ENCODE measurements at regions of chr2 and their contacts with region 1.

Region 1: GRCh38 chr2:231706731-231707624 is 1.3 kb upstream of the PTMA start:
- DNase-seq: peak; percentile 95 to 97
- H3K4me3 ChIP-seq: peak overlapping the region; percentile 73
- H3K4me3 Mint-ChIP-seq: peak overlapping the region; percentile 88
- H3K27ac Mint-ChIP-seq: peak overlapping the region; percentile 99
- H3K4me1 ChIP-seq: no peaks in the 10 kb centered on the region
- H3K4me1 Mint-ChIP-seq: peaks cover 7% of the 10 kb centered on the region
- H3K27me3 ChIP-seq: no peaks in the 10 kb centered on the region
- H3K27me3 Mint-ChIP-seq: no peaks in the 10 kb centered on the region
- CTCF ChIP-seq: peak; percentile 52 to 85

Region 2: DNA sequence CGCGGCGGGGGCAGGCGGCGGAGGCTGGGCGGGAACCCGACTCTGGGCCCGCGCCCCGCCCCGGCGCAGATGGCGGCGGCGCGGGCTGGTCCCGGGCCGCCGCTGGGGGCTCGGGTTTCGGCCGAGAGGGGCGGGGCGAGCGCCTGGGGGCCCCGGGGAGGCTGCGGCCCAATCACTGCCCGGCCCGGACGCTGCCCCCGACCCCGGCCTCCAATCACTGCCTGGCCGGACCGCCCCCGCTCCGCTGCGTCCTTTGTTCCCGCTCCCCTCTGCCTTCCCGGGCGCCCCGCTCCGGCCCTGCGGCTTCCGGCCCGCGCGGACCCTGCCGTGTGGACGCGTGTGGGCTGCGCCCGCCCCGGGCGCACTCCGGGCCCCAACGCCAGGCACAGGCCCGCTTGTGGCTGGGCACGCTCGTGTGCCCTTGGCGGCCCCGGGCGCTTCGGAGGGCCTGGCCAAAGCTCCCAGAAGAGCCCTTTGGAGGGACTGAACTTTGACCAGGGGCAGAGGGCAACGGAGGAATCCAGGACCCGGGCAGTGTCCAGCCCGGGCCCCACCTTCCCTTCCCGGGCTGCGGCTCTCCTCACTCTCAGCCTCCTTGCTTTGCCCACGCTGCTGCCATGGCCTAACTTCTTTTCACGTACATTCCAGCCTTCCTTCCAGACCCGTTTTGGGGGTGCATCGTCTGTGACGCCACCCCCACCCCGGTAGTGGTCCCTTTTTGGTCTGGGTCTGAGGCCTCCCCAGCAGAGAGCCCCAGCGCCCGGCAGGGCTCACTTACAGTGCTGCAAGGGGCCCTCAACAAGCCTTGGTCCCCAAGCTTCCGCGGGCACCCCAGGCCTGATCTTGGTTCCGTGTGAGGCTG is 25.8 kb before region 1 on chr2:
- CTCF ChIA-PET with region 1: interaction called, 9 read pairs
- POLR2A ChIA-PET with region 1: interaction called, 20 read pairs
- intact Hi-C with region 1: loop called (anchors 1 kb)
- DNase-seq: peak; percentile 91 to 94
- H3K4me3 ChIP-seq: peak overlapping the region; percentile 67
- H3K4me3 Mint-ChIP-seq: peak overlapping the region; percentile 81
- H3K27ac Mint-ChIP-seq: peak overlapping the region; percentile 93
- H3K4me1 ChIP-seq: peaks cover 25% of the 10 kb centered on the region
- H3K4me1 Mint-ChIP-seq: peaks cover 16% of the 10 kb centered on the region
- H3K27me3 ChIP-seq: no peaks in the 10 kb centered on the region
- H3K27me3 Mint-ChIP-seq: no peaks in the 10 kb centered on the region
- CTCF ChIP-seq: no peak

Region 3: DNA sequence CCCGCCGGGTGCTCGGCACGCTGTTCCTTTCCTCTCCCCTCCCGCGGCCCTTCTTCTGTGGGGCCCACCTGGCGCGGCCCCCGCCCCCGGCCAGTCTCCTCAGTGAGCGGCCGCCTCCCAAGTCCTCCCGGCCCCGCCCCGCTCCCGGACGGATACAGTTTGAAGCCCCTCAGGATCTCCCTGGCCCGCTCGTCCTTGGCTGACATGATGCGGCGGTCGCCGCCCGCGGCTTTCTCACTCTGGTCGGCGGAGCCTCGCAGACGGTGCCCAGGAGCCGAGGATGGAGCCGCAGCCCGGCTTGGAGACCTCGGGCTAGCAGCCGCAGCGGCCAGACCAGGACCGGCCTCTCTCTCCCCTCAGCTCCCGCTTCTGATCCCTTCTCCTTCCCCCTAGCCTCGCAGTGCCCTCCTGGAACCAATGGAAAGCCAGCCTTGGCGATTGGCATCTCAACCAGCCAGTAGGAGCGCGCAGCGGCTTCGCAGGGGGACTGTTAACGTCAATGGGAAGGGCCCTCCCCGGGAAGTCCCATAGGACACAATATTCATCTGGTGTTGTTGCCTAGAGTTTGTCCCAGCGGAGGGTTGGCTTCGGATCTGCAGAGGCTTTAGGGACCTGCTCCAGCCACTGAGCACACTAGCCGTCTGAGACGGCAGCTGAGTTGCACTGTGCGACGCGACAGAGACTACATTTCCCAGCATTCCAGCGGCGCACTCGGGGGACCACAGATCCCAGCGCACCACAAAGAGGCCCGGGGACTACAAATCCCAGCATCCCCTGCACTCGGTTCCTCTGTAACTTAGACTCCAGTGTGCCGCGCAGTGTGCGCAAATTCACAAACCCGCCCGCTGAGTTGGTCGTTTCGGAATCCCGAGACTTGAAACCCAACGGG is 74.2 kb after region 1 on chr2 and contains the start of gene PDE6D:
- CTCF ChIA-PET with region 1: no interaction called
- POLR2A ChIA-PET with region 1: no interaction called
- intact Hi-C with region 1: loop called (anchors 10 kb)
- DNase-seq: peak; percentile 97
- H3K4me3 ChIP-seq: peak within 1 kb of the TSS; percentile 76
- H3K4me3 Mint-ChIP-seq: peak within 1 kb of the TSS; percentile 92
- H3K27ac Mint-ChIP-seq: peak within 1 kb of the TSS; percentile 53
- H3K4me1 ChIP-seq: no peaks in the 10 kb centered on the region
- H3K4me1 Mint-ChIP-seq: peaks cover 4% of the 10 kb centered on the region
- H3K27me3 ChIP-seq: no peaks in the 10 kb centered on the region
- H3K27me3 Mint-ChIP-seq: no peaks in the 10 kb centered on the region
- CTCF ChIP-seq: no peak
- total RNA-seq, gene PDE6D: 8.1 and 9.1 TPM in 2 replicates

Region 4: DNA sequence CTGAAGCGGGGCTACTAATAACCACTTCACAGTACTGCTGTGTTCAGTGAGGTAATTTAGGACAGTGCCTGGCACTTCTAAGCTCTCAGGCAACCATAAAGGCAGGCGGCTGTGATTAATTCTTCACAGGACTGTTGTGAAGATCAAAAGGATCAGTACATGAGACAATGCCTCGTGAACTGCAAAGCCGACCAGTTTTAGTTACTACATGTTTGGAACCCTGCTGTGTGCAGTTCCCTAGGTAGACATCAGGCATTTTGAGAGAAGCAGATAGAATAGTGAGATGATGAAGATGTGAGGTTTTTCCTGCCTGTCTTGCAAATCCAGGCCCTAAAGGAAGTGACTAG is 945.5 kb after region 1 on chr2:
- CTCF ChIA-PET with region 1: no interaction called
- POLR2A ChIA-PET with region 1: no interaction called
- intact Hi-C with region 1: no loop called
- DNase-seq: no peak
- H3K4me3 ChIP-seq: no peak overlapping the region
- H3K4me3 Mint-ChIP-seq: no peak overlapping the region
- H3K27ac Mint-ChIP-seq: no peak overlapping the region
- H3K4me1 ChIP-seq: no peaks in the 10 kb centered on the region
- H3K4me1 Mint-ChIP-seq: no peaks in the 10 kb centered on the region
- H3K27me3 ChIP-seq: no peaks in the 10 kb centered on the region
- H3K27me3 Mint-ChIP-seq: no peaks in the 10 kb centered on the region
- CTCF ChIP-seq: no peak